Transverse colon (tissue), 4 donors: ENCODE measurements at regions of chr15 and their contacts with region 1.

Region 1: DNA sequence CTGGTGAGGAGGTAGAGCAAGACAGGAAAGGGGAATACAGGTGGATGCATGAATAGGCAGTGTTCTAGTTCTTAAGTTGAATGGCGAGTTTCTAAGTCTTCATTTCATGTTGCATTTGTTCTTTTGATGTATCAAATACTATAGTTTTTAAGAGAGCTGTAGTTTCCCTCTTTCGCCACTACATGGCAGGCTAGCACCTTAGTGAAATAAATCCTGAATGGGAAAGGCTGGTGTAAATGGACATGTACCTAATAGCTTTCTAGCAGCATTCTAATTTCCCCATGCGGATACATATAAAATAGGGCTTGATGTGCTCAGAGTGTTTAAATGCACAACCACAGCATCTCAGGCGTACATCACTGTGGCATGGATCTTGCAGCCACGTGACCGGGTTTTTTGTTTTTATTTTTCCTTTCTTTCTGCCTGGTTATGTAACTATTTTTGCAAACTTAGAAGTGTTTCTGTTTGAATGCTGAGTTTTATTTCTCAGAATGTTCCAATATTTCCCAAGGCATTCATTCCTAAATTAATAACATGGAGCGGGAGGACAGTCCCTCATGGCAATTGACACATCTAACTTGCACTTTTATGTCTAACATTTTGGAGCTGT is 23.5 kb upstream of the CLN6 start:
- DNase-seq: peak; percentile 35
- H3K4me3 ChIP-seq: no peak overlapping the region
- H3K27ac ChIP-seq: no peak overlapping the region
- H3K4me1 ChIP-seq: peaks cover 0 to 14% (median 6%) of the 10 kb centered on the region in 4 donors
- H3K27me3 ChIP-seq: no peaks in the 10 kb centered on the region
- CTCF ChIP-seq: peak; percentile 78 to 88 (median 87)
- EP300 ChIP-seq: no peak
- POLR2A ChIP-seq: no peak

Region 2: DNA sequence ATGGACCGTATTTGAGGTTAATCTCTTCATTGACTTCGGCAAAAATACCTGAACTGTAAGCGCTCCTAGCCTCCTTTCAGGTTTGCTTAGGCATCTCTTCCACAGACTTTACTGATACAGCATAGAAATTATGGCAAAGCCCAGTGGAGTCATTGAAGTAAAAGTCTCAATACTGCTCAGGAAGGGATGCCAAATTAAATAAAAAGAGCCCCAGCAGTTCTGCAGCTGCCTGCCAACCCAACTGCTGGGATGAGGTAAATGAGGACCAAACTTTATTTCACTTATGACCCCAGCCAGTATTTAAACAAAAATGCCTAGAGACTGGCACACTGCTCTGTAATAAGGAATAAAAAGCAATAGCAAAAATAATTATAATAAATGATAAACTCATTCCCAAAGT is 933.1 kb before region 1 on chr15:
- in situ Hi-C with region 1: no loop called
- intact Hi-C with region 1: loop called (anchors 5 kb)
- DNase-seq: no peak
- H3K4me3 ChIP-seq: no peak overlapping the region
- H3K27ac ChIP-seq: no peak overlapping the region
- H3K4me1 ChIP-seq: no peaks in the 10 kb centered on the region
- H3K27me3 ChIP-seq: no peaks in the 10 kb centered on the region
- CTCF ChIP-seq: no peak
- EP300 ChIP-seq: no peak
- POLR2A ChIP-seq: no peak

Region 3: GRCh38 chr15:68304589-68305337 is 51.7 kb after region 1 on chr15:
- in situ Hi-C with region 1: no loop called
- intact Hi-C with region 1: loop called (anchors 10 kb)
- DNase-seq: no peak
- H3K4me3 ChIP-seq: no peak overlapping the region
- H3K27ac ChIP-seq: no peak overlapping the region
- H3K4me1 ChIP-seq: peaks cover 6 to 20% (median 10%) of the 10 kb centered on the region in 4 donors
- H3K27me3 ChIP-seq: no peaks in the 10 kb centered on the region
- CTCF ChIP-seq: no peak
- EP300 ChIP-seq: no peak
- POLR2A ChIP-seq: no peak

Region 4: DNA sequence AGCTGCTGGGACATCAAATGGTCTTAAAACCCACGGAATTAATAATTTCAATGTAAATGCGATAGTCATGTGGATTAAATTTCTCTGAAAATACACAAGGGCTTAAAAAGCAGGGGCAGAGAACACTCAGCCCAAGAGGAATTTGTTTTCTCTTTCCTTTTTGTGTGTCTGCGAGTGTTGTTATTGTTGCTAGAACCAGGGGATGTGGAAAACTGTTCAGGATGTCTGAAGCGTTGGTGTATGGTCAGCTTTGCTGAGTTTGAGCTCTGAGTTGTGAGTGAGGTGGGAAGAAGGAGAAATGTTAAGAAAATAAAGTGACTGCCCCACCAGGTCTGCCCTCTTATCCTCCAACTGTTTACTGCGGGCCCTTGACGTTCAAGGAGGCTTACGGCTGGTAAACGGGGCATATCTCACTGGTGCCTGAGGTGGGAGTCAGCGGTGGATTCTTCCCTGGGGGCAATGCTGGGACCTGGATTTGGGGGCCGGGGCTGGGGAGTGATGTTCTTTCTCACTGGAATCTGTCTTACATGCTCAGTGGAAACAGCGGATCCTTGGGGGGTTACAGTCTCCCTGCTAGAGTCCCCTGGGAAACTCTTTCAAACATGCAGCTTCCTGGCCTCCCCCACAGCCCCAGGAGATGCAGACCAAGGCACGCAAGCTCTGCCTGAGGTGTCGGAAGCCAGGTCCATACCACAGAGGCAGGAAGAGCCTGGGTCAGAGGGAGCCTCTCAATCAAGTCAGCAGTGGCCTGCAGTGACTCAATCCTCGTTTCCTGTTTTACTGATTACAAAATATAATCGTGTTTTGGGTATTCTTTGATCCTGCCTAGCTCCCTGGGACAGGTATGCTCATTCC is 137.1 kb after region 1 on chr15:
- in situ Hi-C with region 1: loop called in 2 of 4 experiments (anchors 5 to 25 kb)
- intact Hi-C with region 1: no loop called
- DNase-seq: no peak
- H3K4me3 ChIP-seq: no peak overlapping the region
- H3K27ac ChIP-seq: no peak overlapping the region
- H3K4me1 ChIP-seq: no peaks in the 10 kb centered on the region
- H3K27me3 ChIP-seq: peaks cover 9% of the 10 kb centered on the region
- CTCF ChIP-seq: no peak
- EP300 ChIP-seq: no peak
- POLR2A ChIP-seq: no peak

Region 5: GRCh38 chr15:68413363-68414205 is 160.6 kb after region 1 on chr15:
- in situ Hi-C with region 1: no loop called
- intact Hi-C with region 1: no loop called
- DNase-seq: no peak
- H3K4me3 ChIP-seq: no peak overlapping the region
- H3K27ac ChIP-seq: peak overlapping the region in 1 of 4 donors; percentile 41
- H3K4me1 ChIP-seq: peaks cover 0 to 8% (median 5%) of the 10 kb centered on the region in 4 donors
- H3K27me3 ChIP-seq: no peaks in the 10 kb centered on the region
- CTCF ChIP-seq: no peak
- EP300 ChIP-seq: no peak
- POLR2A ChIP-seq: no peak

Region 6: DNA sequence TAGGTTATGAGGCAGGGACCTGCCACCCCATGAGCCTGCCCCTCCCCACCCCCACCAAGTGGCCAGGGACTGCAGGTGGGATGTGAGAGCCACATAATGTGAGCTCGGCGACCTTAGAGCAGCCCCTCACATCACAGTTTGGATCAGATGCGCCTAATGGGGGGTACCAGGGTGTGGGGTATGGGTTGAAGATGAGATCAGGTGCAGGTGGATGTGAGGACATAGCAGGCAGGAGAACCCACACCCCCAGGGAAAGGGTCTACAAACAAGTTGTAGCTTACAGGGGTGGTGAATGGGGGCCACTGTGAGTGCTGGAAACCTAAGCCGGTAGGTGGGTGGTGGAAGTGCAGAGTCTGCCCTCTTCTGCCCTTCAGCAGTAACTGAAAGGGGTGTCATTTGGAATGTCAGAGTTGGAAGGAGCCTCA is 419.8 kb after region 1 on chr15:
- in situ Hi-C with region 1: no loop called
- intact Hi-C with region 1: no loop called
- DNase-seq: no peak
- H3K4me3 ChIP-seq: no peak overlapping the region
- H3K27ac ChIP-seq: no peak overlapping the region
- H3K4me1 ChIP-seq: no peaks in the 10 kb centered on the region
- H3K27me3 ChIP-seq: peaks cover 10% of the 10 kb centered on the region
- CTCF ChIP-seq: no peak
- EP300 ChIP-seq: no peak
- POLR2A ChIP-seq: no peak